Body of pancreas (tissue), 4 donors: ENCODE measurements at regions of chr13 and their contacts with region 1.

Region 1: GRCh38 chr13:95191821-95192563 is 109.3 kb downstream of the ABCC4 start:
- DNase-seq: peak; percentile 65 to 80 (median 69)
- ATAC-seq: peak; percentile 72
- H3K4me3 ChIP-seq: no peak overlapping the region
- H3K27ac ChIP-seq: no peak overlapping the region
- H3K4me1 ChIP-seq: no peaks in the 10 kb centered on the region
- H3K27me3 ChIP-seq: no peaks in the 10 kb centered on the region
- CTCF ChIP-seq: peak; percentile 56 to 76 (median 72)
- POLR2A ChIP-seq: no peak

Region 2: GRCh38 chr13:95137096-95137495 is 54.9 kb before region 1 on chr13:
- intact Hi-C with region 1: no loop called
- DNase-seq: no peak
- ATAC-seq: peak; percentile 9
- H3K4me3 ChIP-seq: no peak overlapping the region
- H3K27ac ChIP-seq: no peak overlapping the region
- H3K4me1 ChIP-seq: peaks cover 23% of the 10 kb centered on the region
- H3K27me3 ChIP-seq: no peaks in the 10 kb centered on the region
- CTCF ChIP-seq: no peak
- POLR2A ChIP-seq: no peak

Region 3: DNA sequence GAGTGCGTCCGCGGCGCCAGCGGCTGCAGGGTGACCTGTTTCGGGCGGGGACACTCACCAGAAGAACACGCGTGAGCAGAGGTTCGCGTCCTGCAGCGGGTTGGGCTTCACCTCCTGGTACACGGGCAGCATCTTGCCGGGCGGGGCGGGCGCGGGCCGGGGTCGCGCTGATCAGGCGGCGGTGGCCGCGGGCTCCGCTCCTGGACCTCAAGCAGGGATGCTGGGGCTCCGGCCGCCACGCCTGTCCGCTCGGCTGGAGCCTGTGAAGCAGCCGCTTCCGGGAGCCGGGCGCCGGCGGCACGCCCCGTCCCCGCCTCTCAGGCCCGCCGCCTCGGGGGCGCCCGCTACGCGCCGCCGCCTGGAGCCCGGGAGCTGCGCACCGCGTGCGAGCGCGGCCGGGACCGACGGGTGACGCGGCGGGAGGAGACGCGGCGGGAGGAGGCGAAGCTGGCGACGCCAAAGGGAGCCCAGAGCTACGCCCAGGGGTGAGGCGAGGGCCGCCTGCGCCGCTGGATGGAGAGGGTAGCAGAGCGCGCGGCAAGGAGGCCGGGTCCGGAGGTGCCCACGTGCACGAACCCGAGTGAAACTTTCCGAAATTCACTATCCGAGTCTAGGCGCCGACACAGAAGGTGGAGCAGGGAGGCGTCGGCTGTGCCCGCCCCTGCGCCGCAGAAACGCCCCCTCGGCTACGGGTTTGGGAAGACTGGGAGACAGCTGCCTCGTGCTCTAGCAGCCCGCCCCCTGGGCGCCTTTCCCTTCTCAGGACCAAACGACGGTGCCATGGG is 109.4 kb after region 1 on chr13 and contains the start of gene ABCC4:
- intact Hi-C with region 1: loop called (anchors 10 kb)
- DNase-seq: peak; percentile 60 to 76 (median 66)
- ATAC-seq: peak; percentile 81
- H3K4me3 ChIP-seq: peak within 1 kb of the TSS; percentile 53 to 67
- H3K27ac ChIP-seq: peak within 1 kb of the TSS; percentile 13 to 73 (median 55)
- H3K4me1 ChIP-seq: peaks cover 36% of the 10 kb centered on the region
- H3K27me3 ChIP-seq: no peaks in the 10 kb centered on the region
- CTCF ChIP-seq: peak in 2 of 7 experiments; percentile 24 to 30
- POLR2A ChIP-seq: peak in 1 of 3 donors; percentile 34
- total RNA-seq, gene ABCC4: 5.4 to 6.6 TPM

Region 4: DNA sequence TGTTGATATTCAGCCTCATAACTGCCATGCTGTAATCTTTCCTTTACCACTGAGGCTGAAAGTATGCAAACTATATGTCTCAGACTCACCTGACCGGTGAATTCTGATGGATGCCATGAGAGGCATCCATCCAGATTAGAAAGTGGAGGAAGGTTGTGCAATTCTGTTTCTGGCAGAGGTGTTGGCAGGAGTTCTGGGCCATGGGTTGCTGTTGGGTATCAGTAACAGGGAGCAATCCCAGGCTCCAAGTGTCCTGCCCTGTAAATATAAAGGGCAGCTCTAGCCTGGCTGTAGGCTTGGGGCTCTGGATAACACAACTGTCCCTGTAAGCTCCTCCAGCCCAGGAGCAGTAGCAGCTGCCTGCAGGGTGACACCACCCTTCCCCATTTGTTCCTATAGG is 186.6 kb after region 1 on chr13:
- intact Hi-C with region 1: loop called (anchors 5 kb)
- DNase-seq: no peak
- ATAC-seq: no peak
- H3K4me3 ChIP-seq: no peak overlapping the region
- H3K27ac ChIP-seq: no peak overlapping the region
- H3K4me1 ChIP-seq: peaks cover 9% of the 10 kb centered on the region
- H3K27me3 ChIP-seq: no peaks in the 10 kb centered on the region
- CTCF ChIP-seq: no peak
- POLR2A ChIP-seq: no peak

Region 5: DNA sequence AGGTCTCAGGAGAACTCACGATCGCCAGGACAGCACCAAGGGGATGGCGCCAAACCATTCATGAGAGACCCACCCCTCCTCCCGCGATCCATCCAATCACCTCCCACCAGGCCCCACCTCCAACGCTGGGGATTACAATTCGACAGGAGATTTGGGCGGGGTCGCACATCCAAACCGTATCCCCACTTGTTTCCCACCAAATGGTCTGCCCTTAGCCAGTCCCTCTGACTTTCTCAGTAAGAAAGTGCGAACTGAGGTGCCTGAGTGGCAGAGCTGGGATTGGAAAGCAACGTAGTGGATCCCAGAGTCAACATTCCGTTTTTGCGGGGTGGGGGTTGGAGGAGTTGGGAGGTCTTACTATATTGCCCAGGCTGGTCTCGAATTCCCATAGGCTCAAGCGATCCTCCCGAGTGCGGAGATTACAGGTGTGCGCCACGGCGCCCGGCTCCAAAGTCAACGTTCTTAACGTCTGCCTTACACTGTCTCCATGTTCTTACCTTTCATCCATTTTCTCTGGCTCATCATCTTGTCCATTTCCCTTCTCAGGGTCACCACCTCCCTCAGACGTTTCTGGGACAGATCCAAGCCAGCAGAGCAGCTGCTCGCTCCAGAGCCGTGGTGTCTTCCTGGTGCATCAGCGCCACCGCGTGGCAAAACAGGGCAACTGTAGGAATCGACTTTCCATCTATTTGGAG is 212.0 kb after region 1 on chr13:
- intact Hi-C with region 1: loop called (anchors 5 kb)
- DNase-seq: peak; percentile 83 to 89 (median 87)
- ATAC-seq: peak; percentile 87
- H3K4me3 ChIP-seq: no peak overlapping the region
- H3K27ac ChIP-seq: no peak overlapping the region
- H3K4me1 ChIP-seq: peaks cover 5% of the 10 kb centered on the region
- H3K27me3 ChIP-seq: no peaks in the 10 kb centered on the region
- CTCF ChIP-seq: peak; percentile 87 to 97 (median 94)
- POLR2A ChIP-seq: no peak